ENCODE measurements at regions of chr17 and their contacts with region 1.

Region 1: GRCh38 chr17:29111816-29112499 is 68.2 kb downstream of the MYO18A start:
- DNase-seq: peak; percentile 66
- H3K4me3 ChIP-seq: no peak overlapping the region
- H3K27ac ChIP-seq: no peak overlapping the region
- H3K4me1 ChIP-seq: no peaks in the 10 kb centered on the region
- CTCF ChIP-seq: peak; percentile 91

Region 2: DNA sequence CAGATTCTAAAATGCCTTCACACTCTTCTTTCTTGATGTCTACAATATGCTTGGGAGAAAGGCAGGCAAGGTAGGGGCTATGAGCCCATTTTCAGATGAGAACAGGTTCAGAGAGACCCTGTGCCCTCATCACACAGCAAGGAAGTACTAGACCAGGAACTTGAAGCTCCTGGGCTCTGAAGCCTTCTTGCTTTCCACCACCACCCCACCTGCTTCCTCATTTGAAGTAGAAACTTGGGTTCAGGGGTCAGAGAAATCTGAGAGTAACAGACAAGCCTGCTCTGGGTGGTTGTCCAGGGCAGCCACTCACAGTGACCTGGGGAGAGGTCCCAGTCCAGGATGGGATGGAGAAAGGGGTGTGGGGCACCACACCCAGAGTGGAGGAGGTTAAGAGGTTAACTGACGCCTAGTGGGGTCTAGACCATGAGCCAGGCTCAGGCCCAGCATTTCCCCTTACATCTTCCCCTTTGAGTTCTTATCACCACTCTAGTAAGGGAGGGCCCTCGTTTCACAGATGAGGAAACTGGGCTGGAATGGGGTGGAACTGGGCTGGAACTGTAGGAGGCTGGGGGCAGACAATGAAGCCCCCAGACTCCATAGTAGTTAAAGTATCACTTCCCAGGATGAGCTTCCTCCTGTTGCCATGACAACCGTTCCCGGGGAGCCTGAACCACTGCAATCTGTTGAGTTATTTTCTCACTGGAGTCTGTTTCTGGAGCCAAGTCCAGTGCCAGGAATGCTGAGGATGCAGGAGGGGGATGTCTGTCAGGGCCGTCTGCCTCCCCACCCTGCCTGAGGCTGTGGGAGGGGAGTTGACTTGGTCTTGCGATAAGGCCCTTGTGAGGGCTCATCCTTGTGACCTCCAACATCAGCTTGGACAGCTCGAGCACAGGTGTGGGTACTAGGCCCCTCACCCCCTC is 144.5 kb before region 1 on chr17:
- CTCF ChIA-PET with region 1: interaction called, 16 read pairs
- POLR2A ChIA-PET with region 1: interaction called, 5 read pairs
- intact Hi-C with region 1: loop called (anchors 1 kb)
- DNase-seq: peak; percentile 46
- H3K4me3 ChIP-seq: no peak overlapping the region
- H3K27ac ChIP-seq: no peak overlapping the region
- H3K4me1 ChIP-seq: peaks cover 15% of the 10 kb centered on the region
- CTCF ChIP-seq: no peak

Region 3: GRCh38 chr17:29322363-29322762 is 210.4 kb after region 1 on chr17:
- CTCF ChIA-PET with region 1: no interaction called
- POLR2A ChIA-PET with region 1: interaction called, 11 read pairs
- intact Hi-C with region 1: no loop called
- DNase-seq: no peak
- H3K4me3 ChIP-seq: no peak overlapping the region
- H3K27ac ChIP-seq: no peak overlapping the region
- H3K4me1 ChIP-seq: no peaks in the 10 kb centered on the region
- CTCF ChIP-seq: no peak

Measured in OCI-LY7 (cell line).